ENCODE measurements at regions of chr1 and their contacts with region 1.

Region 1: GRCh38 chr1:110312188-110313121 is 26.7 kb upstream of the RBM15 start:
- DNase-seq: peak; percentile 51
- ATAC-seq: peak; percentile 97
- H3K4me3 ChIP-seq: no peak overlapping the region
- H3K27ac ChIP-seq: peak overlapping the region; percentile 48; the same call in 1 of the 2 replicates
- H3K4me1 ChIP-seq: no peaks in the 10 kb centered on the region
- H3K27me3 ChIP-seq: no peaks in the 10 kb centered on the region
- CTCF ChIP-seq: peak; percentile 83

Region 2: GRCh38 chr1:110203021-110203661 is 109.3 kb before region 1 on chr1:
- CTCF ChIA-PET with region 1: interaction called, 77 read pairs
- POLR2A ChIA-PET with region 1: interaction called, 3 read pairs
- in situ Hi-C with region 1: no loop called
- intact Hi-C with region 1: loop called (anchors 1 kb)
- DNase-seq: no peak
- ATAC-seq: peak; percentile 69
- H3K4me3 ChIP-seq: no peak overlapping the region
- H3K27ac ChIP-seq: no peak overlapping the region
- H3K4me1 ChIP-seq: peaks cover 4% of the 10 kb centered on the region; the same call in 1 of the 2 replicates
- H3K27me3 ChIP-seq: no peaks in the 10 kb centered on the region
- CTCF ChIP-seq: peak; percentile 84

Region 3: DNA sequence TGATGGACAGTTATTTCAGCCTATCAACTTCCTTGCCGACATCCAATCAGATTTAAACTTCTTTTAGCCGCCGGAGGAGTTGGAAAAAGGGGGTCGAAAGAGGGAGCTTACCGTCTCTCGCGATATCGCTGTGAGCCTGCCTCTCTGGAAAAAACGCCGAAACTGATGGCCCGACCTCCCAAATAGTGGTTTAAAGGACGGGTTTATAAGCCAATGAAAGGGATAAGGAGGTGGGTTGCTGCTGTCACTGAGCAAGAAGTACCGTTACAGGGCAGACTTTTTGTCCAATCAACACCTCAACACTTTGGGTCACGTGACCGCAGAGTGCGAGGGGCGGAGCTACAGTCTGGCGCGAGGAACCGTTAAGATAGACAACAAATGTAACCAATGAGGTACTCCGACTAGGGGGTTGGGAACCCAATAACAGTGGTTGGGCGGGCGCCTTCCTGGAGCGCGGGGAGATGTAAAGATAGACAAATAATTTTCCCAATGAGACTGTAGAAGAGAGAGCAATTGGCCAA is 26.5 kb after region 1 on chr1 and contains the start of gene RBM15:
- CTCF ChIA-PET with region 1: no interaction called
- POLR2A ChIA-PET with region 1: interaction called, 11 read pairs
- in situ Hi-C with region 1: no loop called
- intact Hi-C with region 1: no loop called
- DNase-seq: peak; percentile 100
- ATAC-seq: peak; percentile 85
- H3K4me3 ChIP-seq: peak within 1 kb of the TSS; percentile 88 to 92
- H3K27ac ChIP-seq: peak within 1 kb of the TSS; percentile 99
- H3K4me1 ChIP-seq: peaks cover 30% of the 10 kb centered on the region
- H3K27me3 ChIP-seq: no peaks in the 10 kb centered on the region
- CTCF ChIP-seq: no peak
- total RNA-seq, gene RBM15: 32.1 TPM